ENCODE measurements at regions of chr6 and their contacts with region 1.

Region 1: GRCh38 chr6:30556066-30556905 is at the start of gene GNL1:
- DNase-seq: peak; percentile 98
- total RNA-seq, gene GNL1: 19.6 TPM

Region 2: GRCh38 chr6:30571075-30571768 is 14.9 kb after region 1 on chr6 and contains the start of gene ABCF1:
- intact Hi-C with region 1: loop called (anchors 2 kb)
- DNase-seq: peak; percentile 100
- total RNA-seq, gene ABCF1: 44.2 TPM

Region 3: GRCh38 chr6:30590994-30591393 is 34.7 kb after region 1 on chr6:
- intact Hi-C with region 1: no loop called
- DNase-seq: no peak